ENCODE measurements at regions of chr12 and their contacts with region 1.

Region 1: DNA sequence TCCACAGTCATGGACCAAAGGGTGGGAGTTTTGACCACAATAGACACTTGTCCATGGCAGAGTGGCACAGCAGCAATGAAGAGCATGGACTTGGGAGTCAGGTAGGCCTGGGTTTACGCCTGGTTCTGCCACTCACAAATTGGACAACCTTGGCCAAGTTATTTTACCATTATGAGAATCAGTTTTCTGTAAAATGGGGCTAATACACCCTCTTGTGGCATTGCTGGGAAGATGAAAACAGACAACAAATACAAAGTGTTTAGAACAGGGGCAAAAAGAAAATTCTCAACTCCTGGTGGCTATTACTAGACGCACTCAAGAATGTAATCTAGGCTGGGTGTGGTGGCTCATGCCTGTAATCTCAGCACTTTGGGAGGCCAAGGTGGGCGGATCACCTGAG is 2.6 kb downstream of the C12orf43 start:
- DNase-seq: no peak
- H3K4me3 ChIP-seq: no peak overlapping the region
- H3K27ac ChIP-seq: no peak overlapping the region
- H3K4me1 ChIP-seq: peaks cover 7% of the 10 kb centered on the region
- H3K27me3 ChIP-seq: no peaks in the 10 kb centered on the region
- CTCF ChIP-seq: no peak

Region 2: DNA sequence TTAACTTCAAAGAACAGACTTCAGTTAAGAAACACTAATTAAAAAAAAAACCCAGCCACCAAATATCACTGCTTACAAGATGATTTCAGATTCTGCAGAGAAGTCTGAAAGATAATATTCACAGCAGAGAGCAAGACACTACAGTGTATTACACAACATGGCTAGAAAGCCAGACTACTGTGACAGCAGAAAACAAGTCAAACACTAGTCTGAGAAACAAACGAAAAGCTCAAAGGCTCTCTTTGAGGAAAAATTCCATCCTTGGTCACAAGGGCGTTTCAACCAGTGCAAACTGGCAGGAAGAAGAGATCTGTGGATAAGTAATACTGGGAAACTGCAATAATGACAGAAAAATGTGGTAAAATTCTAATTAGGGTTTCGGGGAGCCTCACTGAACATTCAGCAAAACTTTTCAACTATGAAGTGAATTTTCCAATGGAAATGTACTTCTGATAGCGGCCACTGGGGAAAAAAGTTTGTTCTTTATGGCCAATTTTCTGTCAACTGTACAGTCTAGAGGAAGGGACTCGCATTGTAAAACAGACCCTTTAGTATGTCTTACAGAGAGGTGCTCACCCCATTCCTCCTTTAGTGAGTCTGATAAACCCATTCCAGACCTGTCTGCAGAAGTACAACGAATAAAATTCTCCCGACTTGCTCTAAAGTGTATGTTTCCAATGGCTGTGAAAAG is 237.7 kb before region 1 on chr12:
- CTCF ChIA-PET with region 1: no interaction called
- POLR2A ChIA-PET with region 1: no interaction called
- intact Hi-C with region 1: no loop called
- DNase-seq: no peak
- H3K4me3 ChIP-seq: no peak overlapping the region
- H3K27ac ChIP-seq: no peak overlapping the region
- H3K4me1 ChIP-seq: no peaks in the 10 kb centered on the region
- H3K27me3 ChIP-seq: no peaks in the 10 kb centered on the region
- CTCF ChIP-seq: 0 out of 2 replicates have a peak, but pooled peaks have one; percentile 11

Region 3: GRCh38 chr12:121050725-121051124 is 37.0 kb after region 1 on chr12:
- CTCF ChIA-PET with region 1: interaction called, 13 read pairs
- POLR2A ChIA-PET with region 1: no interaction called
- intact Hi-C with region 1: no loop called
- DNase-seq: peak; percentile 53
- H3K4me3 ChIP-seq: no peak overlapping the region
- H3K27ac ChIP-seq: no peak overlapping the region
- H3K4me1 ChIP-seq: no peaks in the 10 kb centered on the region
- H3K27me3 ChIP-seq: no peaks in the 10 kb centered on the region
- CTCF ChIP-seq: no peak

Measured in A673 (cell line).